Lower leg skin (tissue), 4 donors: ENCODE measurements at regions of chr1 and their contacts with region 1.

Region 1: DNA sequence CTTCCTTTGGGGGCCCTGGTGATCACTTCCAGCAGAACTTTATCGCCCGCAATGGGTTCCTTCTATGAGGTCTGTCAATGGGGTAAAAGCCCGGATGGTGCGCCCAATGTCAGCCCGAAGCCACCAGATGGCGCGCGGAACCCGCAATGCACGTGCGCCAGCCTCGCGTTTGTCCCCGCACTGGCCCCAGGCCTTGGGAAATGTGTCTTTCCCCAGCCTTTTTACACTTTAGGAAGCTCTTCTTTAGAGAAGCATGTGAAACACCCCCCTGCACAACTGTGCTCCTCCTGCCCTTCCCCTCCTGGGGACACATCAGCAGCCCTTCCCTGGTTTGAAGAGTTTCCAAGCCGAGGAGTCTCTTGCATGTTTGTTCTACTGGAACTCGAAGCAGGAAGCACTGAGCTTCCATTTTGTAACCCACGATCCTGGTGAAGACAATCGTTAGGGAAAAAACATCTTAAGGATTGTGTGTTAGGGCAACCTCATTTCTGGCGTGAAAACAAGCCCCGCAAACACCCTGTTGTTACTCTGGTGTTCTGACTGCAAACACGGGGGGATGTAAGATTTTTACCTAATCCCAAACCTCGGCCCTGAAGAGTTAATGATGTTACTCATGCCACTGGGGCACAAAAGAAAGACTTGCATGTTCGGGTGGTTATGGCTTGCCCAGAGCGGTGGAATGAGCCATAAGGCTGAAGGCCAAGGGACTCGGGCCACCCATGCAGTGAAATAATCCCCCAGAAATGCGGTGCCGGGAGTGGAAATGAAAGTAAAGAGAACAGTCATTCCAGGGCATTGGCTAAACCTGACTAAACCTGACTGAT is 20.4 kb upstream of the TARBP1 start:
- DNase-seq: peak; percentile 91 to 99
- H3K4me3 ChIP-seq: no peak overlapping the region
- CTCF ChIP-seq: peak in 2 of 3 donors; percentile 4 to 91
- POLR2A ChIP-seq: no peak

Region 2: DNA sequence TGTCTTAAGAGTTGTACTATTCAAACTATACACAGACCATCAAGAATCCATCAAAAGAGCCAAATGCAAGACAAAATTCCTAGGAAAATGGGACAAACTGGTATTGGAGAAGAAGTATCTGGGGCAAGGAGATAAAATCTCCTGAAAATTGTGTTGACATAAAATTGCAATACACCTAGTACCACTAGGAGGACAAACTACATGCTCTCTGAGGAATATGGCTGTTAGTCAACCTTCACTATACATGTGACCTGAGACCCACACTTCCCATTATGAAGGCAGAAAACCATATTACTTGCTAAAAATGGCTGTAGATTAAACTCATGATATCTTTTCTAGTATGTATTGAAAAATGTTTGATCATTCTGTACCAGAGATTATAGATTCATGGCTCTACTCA is 80.6 kb after region 1 on chr1:
- intact Hi-C with region 1: loop called (anchors 10 kb)
- DNase-seq: no peak
- H3K4me3 ChIP-seq: no peak overlapping the region
- CTCF ChIP-seq: no peak
- POLR2A ChIP-seq: no peak

Region 3: GRCh38 chr1:234730770-234731568 is 231.6 kb after region 1 on chr1:
- intact Hi-C with region 1: loop called (anchors 10 kb)
- DNase-seq: no peak
- H3K4me3 ChIP-seq: no peak overlapping the region
- CTCF ChIP-seq: no peak
- POLR2A ChIP-seq: no peak

Region 4: DNA sequence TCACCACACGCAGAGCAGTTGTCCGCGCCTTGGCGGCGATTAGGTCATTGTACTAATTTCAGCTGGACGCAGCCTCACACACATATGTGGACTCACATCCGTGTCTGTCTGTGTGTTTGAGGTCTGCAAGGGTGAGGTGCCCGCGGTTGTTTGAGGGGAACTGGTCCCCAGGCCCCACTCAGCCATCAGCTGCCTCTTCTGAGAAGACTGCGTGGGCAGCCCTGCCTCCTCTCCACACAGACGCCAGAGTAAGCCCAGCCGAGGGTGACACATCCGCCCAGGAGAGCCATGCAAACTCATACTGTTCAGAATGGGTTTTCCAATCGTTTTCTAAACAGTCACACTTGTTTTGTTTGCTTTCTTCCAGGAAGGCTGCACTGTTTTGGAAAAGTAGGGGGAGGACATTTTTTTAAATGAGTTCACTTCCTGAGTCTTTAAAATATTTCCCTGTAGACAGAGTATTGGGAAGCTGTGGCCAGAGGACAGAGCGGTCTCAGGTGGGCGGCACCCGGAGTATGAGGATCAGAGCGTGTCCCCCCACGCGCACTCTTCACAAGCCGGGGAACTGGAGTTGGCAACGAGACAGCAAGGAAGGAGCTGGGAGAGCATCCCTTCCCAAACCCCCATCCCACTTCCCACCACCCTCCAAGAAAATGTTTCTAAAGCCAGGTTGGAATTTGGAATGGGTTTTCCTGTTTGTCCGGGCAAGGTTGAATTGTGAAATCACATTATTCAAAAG is 576.0 kb after region 1 on chr1:
- intact Hi-C with region 1: loop called (anchors 5 kb)
- DNase-seq: peak in 1 of 2 donors; percentile 91
- H3K4me3 ChIP-seq: no peak overlapping the region
- CTCF ChIP-seq: no peak
- POLR2A ChIP-seq: no peak